Heart right ventricle (tissue), 16 donors: ENCODE measurements at regions of chr7 and their contacts with region 1.

Region 1: GRCh38 chr7:13673290-13673689 is 316.2 kb downstream of the ETV1 start:
- DNase-seq: no peak
- ATAC-seq: no peak
- H3K4me3 ChIP-seq: no peak overlapping the region
- H3K27ac ChIP-seq: no peak overlapping the region
- H3K4me1 ChIP-seq: no peaks in the 10 kb centered on the region
- H3K27me3 ChIP-seq: no peaks in the 10 kb centered on the region
- CTCF ChIP-seq: no peak

Region 2: GRCh38 chr7:14551310-14551709 is 878.0 kb after region 1 on chr7:
- intact Hi-C with region 1: loop called in 1 of 10 experiments (anchors 5 kb)
- DNase-seq: no peak
- ATAC-seq: peak in 1 of 8 donors; percentile 23
- H3K4me3 ChIP-seq: no peak overlapping the region
- H3K27ac ChIP-seq: no peak overlapping the region
- H3K4me1 ChIP-seq: no peaks in the 10 kb centered on the region
- H3K27me3 ChIP-seq: no peaks in the 10 kb centered on the region
- CTCF ChIP-seq: no peak